ENCODE measurements at regions of chr7 and their contacts with region 1.

Region 1: GRCh38 chr7:3493499-3493898 is 192.4 kb downstream of the SDK1 start:
- DNase-seq: no peak
- ATAC-seq: no peak
- H3K4me3 ChIP-seq: no peak overlapping the region
- H3K27ac ChIP-seq: no peak overlapping the region
- H3K4me1 ChIP-seq: peaks cover 9% of the 10 kb centered on the region; the same call in 2 of the 3 replicates
- CTCF ChIP-seq: no peak
- EP300 ChIP-seq: no peak
- POLR2A ChIP-seq: no peak
- RAD21 ChIP-seq: no peak

Region 2: GRCh38 chr7:3200504-3200903 is 293.0 kb before region 1 on chr7:
- CTCF ChIA-PET with region 1: no interaction called
- POLR2A ChIA-PET with region 1: no interaction called
- DNase-seq: peak; percentile 38 to 44
- ATAC-seq: peak; percentile 66 to 79; a peak in 5 of 6 replicates
- H3K4me3 ChIP-seq: no peak overlapping the region
- H3K27ac ChIP-seq: no peak overlapping the region
- H3K4me1 ChIP-seq: peaks cover 2% of the 10 kb centered on the region; the same call in 2 of the 3 replicates
- CTCF ChIP-seq: peak; percentile 42
- EP300 ChIP-seq: no peak
- POLR2A ChIP-seq: no peak
- RAD21 ChIP-seq: peak; percentile 55 to 68

Region 3: DNA sequence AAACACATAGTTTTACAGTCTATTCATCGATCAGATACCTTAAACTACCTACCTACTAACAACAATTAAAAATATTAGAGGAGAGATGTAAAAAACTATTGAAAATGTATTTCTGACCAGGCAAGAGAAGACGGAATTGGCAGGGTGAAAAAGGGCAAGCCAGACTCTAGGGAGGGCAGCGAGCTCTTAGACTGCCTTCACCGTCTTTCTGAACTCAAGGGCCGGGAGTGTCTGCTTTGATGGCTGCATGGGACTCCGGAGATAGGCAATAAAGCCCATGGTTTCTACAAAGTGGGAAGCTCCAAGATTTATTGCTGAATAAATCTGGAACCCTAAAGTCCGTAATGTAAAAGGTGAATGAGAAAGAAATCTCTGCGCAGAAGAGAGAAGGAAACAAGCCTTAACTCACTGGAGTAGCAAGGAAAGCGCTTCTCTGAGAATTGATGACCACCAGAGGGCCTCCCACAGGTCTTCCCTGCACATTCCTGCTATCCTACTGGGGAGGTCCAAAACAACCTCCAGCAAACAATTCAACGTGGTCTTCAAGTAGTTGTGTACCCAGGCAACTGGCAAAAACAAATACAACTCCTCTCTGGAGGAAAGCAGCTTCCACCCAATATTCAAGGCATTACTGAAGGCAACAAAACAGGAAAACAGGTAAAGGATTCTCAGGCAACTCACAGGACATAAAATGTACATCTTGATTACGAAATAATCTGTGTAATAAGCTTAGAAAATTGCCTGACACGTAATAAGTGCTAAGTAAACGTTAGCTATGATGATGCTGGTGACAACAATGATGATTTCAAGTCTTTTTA is 11.1 kb before region 1 on chr7:
- CTCF ChIA-PET with region 1: interaction called, 14 read pairs
- POLR2A ChIA-PET with region 1: no interaction called
- DNase-seq: peak; percentile 31 to 62
- ATAC-seq: peak; percentile 94 to 97
- H3K4me3 ChIP-seq: no peak overlapping the region
- H3K27ac ChIP-seq: no peak overlapping the region
- H3K4me1 ChIP-seq: peaks cover 5% of the 10 kb centered on the region; the same call in 1 of the 3 replicates
- CTCF ChIP-seq: peak; percentile 70
- EP300 ChIP-seq: no peak
- POLR2A ChIP-seq: no peak
- RAD21 ChIP-seq: peak; percentile 52 to 69

Region 4: DNA sequence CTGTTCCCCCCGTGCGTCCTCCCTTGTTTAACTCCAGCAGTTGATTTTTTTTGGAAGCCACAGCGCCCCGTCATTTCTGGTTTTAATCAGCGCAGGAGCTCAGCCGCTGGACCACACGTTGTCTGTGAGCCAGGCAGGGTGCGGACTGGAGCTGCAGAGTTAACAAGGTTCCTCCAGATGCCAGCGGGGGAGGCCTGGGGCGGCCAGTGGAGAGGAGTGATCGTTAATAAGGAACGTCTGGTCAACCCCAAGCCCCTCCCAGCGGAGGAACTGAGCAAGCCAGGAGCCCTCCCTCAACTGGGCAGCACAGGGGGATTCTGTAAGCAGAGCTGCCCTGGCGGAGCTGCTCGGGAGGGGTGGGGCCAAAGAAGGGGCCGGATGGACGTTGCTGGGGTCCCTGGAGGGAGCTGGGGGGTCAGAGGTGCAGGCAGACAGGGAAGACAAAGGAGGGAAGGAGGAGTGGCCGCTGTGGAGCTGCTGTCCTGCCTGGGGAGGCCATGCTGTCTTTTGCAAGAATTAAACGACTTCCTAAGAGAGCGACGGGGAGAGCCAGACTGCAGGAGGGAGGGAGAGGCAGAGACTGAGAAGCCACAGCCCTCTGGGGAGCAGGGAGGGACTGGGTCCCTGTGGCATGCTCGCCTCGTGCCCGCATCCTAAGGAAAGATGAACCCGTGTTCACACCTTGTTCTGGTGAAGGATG is 651.5 kb after region 1 on chr7:
- CTCF ChIA-PET with region 1: no interaction called
- POLR2A ChIA-PET with region 1: no interaction called
- DNase-seq: no peak
- ATAC-seq: no peak; a peak in 2 of 6 replicates
- H3K4me3 ChIP-seq: no peak overlapping the region
- H3K27ac ChIP-seq: no peak overlapping the region
- H3K4me1 ChIP-seq: no peaks in the 10 kb centered on the region
- CTCF ChIP-seq: no peak
- EP300 ChIP-seq: no peak
- POLR2A ChIP-seq: no peak
- RAD21 ChIP-seq: no peak

Region 5: DNA sequence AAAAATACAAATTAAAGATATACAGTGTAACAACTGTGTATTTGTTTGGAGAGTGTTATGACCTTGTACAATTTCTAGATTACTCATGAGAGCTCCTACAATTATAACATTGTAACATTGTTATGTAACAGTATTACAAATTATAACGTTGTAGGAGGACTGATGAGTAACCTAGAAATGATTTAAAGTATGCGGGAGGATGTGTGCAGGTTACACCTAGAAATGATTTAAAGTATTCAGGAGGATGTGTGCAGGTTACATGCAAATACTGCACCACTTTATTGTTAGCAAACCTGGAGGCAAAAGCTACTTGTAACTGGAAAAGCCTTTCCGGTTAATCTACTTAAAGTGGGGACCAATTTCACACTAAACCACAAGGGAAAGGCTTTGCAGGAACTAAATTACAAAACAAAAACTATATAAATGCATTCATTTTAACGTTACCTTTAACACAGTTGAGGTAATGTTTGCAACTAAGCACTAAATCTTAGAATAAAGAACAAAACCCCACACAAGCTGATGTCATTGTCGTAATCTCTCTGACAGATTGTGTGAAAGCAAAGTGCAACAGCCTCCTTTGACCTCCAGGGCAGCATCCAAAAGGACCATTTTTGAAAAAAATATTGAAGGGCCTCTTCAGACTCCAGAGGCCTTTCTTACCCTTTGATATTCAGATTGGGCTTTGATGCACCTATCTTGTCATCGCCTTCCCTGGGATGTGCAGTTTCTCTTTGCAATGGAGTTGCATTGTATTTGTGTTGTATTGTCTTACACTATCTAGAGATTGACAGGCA is 666.5 kb after region 1 on chr7:
- CTCF ChIA-PET with region 1: no interaction called
- POLR2A ChIA-PET with region 1: no interaction called
- DNase-seq: no peak
- ATAC-seq: no peak
- H3K4me3 ChIP-seq: no peak overlapping the region
- H3K27ac ChIP-seq: no peak overlapping the region
- H3K4me1 ChIP-seq: 0 out of 3 replicates have a peak, but pooled peaks cover 7% of the 10 kb centered on the region
- CTCF ChIP-seq: no peak
- EP300 ChIP-seq: no peak
- POLR2A ChIP-seq: no peak
- RAD21 ChIP-seq: no peak